Activated CD4-positive, alpha-beta memory T cell treated with anti-CD3 and anti-CD28 coated beads, Interleukin-2, amount 10 ng/mL, durations not matched to agents 7 days and 5 days (primary cell): ENCODE measurements at regions of chr16 and their contacts with region 1.

Region 1: DNA sequence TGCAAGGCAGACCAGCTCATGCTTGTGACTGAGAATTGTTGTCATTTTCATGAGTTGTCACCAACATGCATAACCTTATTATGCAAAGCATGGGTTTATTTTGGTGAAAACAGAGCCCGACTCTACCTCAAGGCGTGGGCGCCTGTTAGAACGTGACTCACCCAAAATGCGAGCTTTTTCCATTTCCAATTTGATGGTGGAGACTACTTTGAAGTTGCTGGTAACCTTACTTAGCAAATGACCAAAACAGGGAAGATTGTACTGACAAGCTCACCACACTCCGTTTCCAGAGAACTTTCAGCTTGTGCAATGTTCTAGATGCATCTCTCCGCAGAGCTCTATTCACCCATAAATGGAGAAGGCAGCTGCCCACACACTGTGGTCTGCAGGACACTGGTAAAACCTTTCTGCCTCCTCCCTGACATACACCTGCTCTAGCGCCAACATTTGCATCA is 284.5 kb downstream of the MAF start:
- DNase-seq: peak; percentile 66
- H3K4me3 Mint-ChIP-seq: peak overlapping the region; percentile 15
- H3K27ac Mint-ChIP-seq: peak overlapping the region; percentile 84
- H3K4me1 Mint-ChIP-seq: peaks cover 35% of the 10 kb centered on the region
- H3K27me3 Mint-ChIP-seq: no peaks in the 10 kb centered on the region

Region 2: GRCh38 chr16:79269211-79269863 is 46.7 kb before region 1 on chr16:
- CTCF ChIA-PET with region 1: interaction called, 8 read pairs
- POLR2A ChIA-PET with region 1: interaction called, 11 read pairs
- DNase-seq: peak; percentile 75
- H3K4me3 Mint-ChIP-seq: peak overlapping the region; percentile 52
- H3K27ac Mint-ChIP-seq: peak overlapping the region; percentile 89
- H3K4me1 Mint-ChIP-seq: peaks cover 90% of the 10 kb centered on the region
- H3K27me3 Mint-ChIP-seq: no peaks in the 10 kb centered on the region

Region 3: DNA sequence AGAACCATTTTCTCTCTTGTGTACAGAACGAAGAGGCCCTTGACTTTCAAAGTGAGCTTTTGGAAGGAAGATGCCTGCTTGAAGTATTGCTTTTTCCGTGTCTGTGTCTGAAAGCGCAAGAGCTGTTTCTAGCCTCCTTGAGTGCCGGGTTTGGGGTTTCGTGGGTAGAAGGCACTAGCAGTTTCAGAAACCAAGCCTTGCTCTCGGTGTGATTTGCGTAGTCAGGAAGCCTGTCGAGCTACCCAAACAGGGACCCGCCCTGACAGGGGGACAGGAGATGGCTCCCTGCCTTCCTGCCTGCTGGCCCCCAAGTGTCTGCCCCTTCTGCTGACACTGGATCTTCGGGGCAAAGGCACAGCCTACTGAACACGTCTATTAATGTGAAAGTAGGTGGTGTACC is 37.5 kb before region 1 on chr16:
- CTCF ChIA-PET with region 1: interaction called, 3 read pairs
- POLR2A ChIA-PET with region 1: interaction called, 20 read pairs
- DNase-seq: peak; percentile 85
- H3K4me3 Mint-ChIP-seq: peak overlapping the region; percentile 65
- H3K27ac Mint-ChIP-seq: peak overlapping the region; percentile 92
- H3K4me1 Mint-ChIP-seq: peaks cover 85% of the 10 kb centered on the region
- H3K27me3 Mint-ChIP-seq: no peaks in the 10 kb centered on the region

Region 4: GRCh38 chr16:79286646-79287423 is 29.2 kb before region 1 on chr16:
- CTCF ChIA-PET with region 1: no interaction called
- POLR2A ChIA-PET with region 1: interaction called, 13 read pairs
- DNase-seq: peak; percentile 50
- H3K4me3 Mint-ChIP-seq: peak overlapping the region; percentile 59
- H3K27ac Mint-ChIP-seq: peak overlapping the region; percentile 78
- H3K4me1 Mint-ChIP-seq: peaks cover 63% of the 10 kb centered on the region
- H3K27me3 Mint-ChIP-seq: no peaks in the 10 kb centered on the region

Region 5: DNA sequence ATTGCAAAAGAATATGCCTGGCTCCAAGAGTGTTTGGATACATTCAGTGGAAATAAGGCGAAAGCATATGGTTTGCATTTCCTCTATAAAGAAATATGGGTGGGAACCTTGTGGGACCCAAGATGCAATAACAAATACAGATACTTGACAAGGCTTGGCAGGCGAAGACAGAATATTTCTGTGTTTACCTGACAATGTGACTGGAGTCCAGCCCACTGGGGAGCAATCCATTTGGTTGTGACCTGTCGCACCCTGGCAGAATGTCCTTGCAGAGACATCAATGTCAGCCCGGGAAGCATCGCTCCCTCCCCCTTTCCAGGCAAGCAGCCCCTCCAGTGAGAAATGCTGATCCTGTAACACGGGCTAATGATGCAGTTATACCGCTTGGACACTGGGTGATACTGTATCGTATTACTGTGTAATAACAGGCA is 12.1 kb before region 1 on chr16:
- CTCF ChIA-PET with region 1: no interaction called
- POLR2A ChIA-PET with region 1: no interaction called
- DNase-seq: no peak
- H3K4me3 Mint-ChIP-seq: no peak overlapping the region
- H3K27ac Mint-ChIP-seq: no peak overlapping the region
- H3K4me1 Mint-ChIP-seq: peaks cover 9% of the 10 kb centered on the region
- H3K27me3 Mint-ChIP-seq: no peaks in the 10 kb centered on the region